ENCODE measurements at regions of chr2 and their contacts with region 1.

Region 1: GRCh38 chr2:130372055-130372832 is 16.4 kb downstream of the PTPN18 start:
- DNase-seq: peak; percentile 38 to 94
- H3K4me3 ChIP-seq: peak overlapping the region; percentile 82 to 94
- H3K27ac ChIP-seq: peak overlapping the region; percentile 73 to 89
- H3K4me1 ChIP-seq: peaks cover 0 to 16% of the 10 kb centered on the region in 2 donors
- H3K27me3 ChIP-seq: no peaks in the 10 kb centered on the region
- CTCF ChIP-seq: peak; percentile 86 to 93 (median 87)

Region 2: GRCh38 chr2:129923265-129924091 is 448.8 kb before region 1 on chr2:
- intact Hi-C with region 1: no loop called
- DNase-seq: no peak
- H3K4me3 ChIP-seq: no peak overlapping the region
- H3K27ac ChIP-seq: no peak overlapping the region
- H3K4me1 ChIP-seq: no peaks in the 10 kb centered on the region
- H3K27me3 ChIP-seq: peaks cover 9% of the 10 kb centered on the region
- CTCF ChIP-seq: peak in 2 of 3 experiments; percentile 14 to 39

Region 3: GRCh38 chr2:130391058-130391871 is 19.0 kb after region 1 on chr2:
- intact Hi-C with region 1: loop called (anchors 2 kb)
- DNase-seq: peak in 1 of 2 donors; percentile 84
- H3K4me3 ChIP-seq: peak overlapping the region; percentile 65 to 91
- H3K27ac ChIP-seq: peak overlapping the region; percentile 82 to 83
- H3K4me1 ChIP-seq: peaks cover 0 to 12% of the 10 kb centered on the region in 2 donors
- H3K27me3 ChIP-seq: no peaks in the 10 kb centered on the region
- CTCF ChIP-seq: no peak

Measured in ascending aorta (tissue), 2 donors.